G401 (cell line): ENCODE measurements at regions of chr11 and their contacts with region 1.

Region 1: DNA sequence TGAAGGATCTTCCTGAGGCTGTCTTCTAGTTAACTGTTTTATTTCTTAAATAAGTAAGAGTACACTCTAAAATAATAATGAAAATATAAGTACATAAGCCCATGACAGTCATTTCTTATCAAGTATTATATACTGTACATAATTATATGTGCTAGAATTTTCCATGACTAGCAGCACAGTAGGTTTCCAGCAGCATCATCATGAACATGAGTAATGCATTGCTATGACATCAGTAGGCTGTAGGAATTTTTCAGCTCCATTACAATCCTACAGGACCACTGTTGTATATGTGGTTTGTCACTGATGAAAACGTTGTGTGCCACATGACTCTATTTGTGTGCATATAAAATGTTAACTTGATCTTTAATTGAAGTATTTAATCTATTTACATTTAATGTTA is 22.0 kb downstream of the ZNF202 start:
- DNase-seq: no peak

Region 2: GRCh38 chr11:123628936-123629683 is 90.3 kb before region 1 on chr11:
- in situ Hi-C with region 1: loop called (anchors 10 kb)
- DNase-seq: peak; percentile 80

Region 3: GRCh38 chr11:123760894-123761293 is 41.4 kb after region 1 on chr11:
- in situ Hi-C with region 1: no loop called
- DNase-seq: no peak

Region 4: GRCh38 chr11:123775289-123775688 is 55.8 kb after region 1 on chr11:
- in situ Hi-C with region 1: no loop called
- DNase-seq: no peak